Caco-2 (cell line): ENCODE measurements at regions of chr1 and their contacts with region 1.

Region 1: DNA sequence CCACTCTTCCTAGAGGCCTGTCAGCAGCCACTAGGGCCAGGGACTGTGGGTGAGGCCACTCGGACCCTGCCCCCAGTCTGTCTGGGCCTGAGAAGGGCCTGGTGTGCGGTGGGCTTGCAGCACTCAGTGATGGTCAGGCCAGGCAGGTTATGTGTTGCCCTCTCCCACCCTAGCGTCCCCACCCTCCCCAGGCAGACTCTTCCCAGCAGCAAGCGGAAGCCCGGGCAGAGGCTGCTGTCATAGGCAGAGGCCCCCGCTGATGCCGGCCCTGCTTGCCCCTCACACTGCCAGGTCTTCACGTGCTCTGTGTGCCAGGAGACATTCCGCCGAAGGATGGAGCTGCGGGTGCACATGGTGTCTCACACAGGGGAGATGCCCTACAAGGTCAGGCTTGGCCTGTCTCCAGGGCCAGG is 6.6 kb downstream of the ZBTB48 start:
- DNase-seq: no peak
- H3K4me3 ChIP-seq: no peak overlapping the region
- H3K4me3 Mint-ChIP-seq: no peak overlapping the region
- H3K27ac Mint-ChIP-seq: no peak overlapping the region
- H3K4me1 ChIP-seq: peaks cover 16% of the 10 kb centered on the region
- H3K4me1 Mint-ChIP-seq: no peaks in the 10 kb centered on the region
- H3K27me3 ChIP-seq: no peaks in the 10 kb centered on the region
- H3K27me3 Mint-ChIP-seq: no peaks in the 10 kb centered on the region
- CTCF ChIP-seq: no peak

Region 2: DNA sequence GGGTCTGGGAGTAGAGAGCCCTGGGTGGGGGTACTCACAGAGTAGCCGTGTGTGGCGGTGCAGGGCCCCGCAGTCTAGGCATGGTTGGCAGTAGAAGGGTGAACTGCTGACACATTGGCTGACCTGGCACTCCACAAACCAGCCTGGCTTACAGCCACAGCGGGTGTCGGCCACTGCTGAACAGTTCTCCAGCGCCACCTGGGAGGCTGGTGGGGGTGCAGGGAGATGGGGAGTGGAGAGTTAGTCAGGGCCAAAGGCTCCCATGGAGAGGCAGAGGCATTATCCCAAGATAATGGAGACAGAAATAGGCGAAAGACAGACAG is 121.9 kb before region 1 on chr1:
- CTCF ChIA-PET with region 1: no interaction called
- POLR2A ChIA-PET with region 1: no interaction called
- intact Hi-C with region 1: no loop called
- DNase-seq: peak in 1 of 2 experiments; percentile 37
- H3K4me3 ChIP-seq: no peak overlapping the region
- H3K4me3 Mint-ChIP-seq: no peak overlapping the region
- H3K27ac Mint-ChIP-seq: no peak overlapping the region
- H3K4me1 ChIP-seq: no peaks in the 10 kb centered on the region
- H3K4me1 Mint-ChIP-seq: no peaks in the 10 kb centered on the region
- H3K27me3 ChIP-seq: no peaks in the 10 kb centered on the region
- H3K27me3 Mint-ChIP-seq: no peaks in the 10 kb centered on the region
- CTCF ChIP-seq: peak in 1 of 2 experiments; percentile 32

Region 3: GRCh38 chr1:6827079-6827478 is 240.7 kb after region 1 on chr1:
- CTCF ChIA-PET with region 1: interaction called, 10 read pairs
- POLR2A ChIA-PET with region 1: no interaction called
- intact Hi-C with region 1: no loop called
- DNase-seq: no peak
- H3K4me3 ChIP-seq: no peak overlapping the region
- H3K4me3 Mint-ChIP-seq: no peak overlapping the region
- H3K27ac Mint-ChIP-seq: no peak overlapping the region
- H3K4me1 ChIP-seq: peaks cover 3% of the 10 kb centered on the region; the same call in 1 of the 2 replicates
- H3K4me1 Mint-ChIP-seq: peaks cover 10% of the 10 kb centered on the region
- H3K27me3 ChIP-seq: no peaks in the 10 kb centered on the region
- H3K27me3 Mint-ChIP-seq: no peaks in the 10 kb centered on the region
- CTCF ChIP-seq: no peak